ENCODE measurements at regions of chr5 and their contacts with region 1.

Region 1: DNA sequence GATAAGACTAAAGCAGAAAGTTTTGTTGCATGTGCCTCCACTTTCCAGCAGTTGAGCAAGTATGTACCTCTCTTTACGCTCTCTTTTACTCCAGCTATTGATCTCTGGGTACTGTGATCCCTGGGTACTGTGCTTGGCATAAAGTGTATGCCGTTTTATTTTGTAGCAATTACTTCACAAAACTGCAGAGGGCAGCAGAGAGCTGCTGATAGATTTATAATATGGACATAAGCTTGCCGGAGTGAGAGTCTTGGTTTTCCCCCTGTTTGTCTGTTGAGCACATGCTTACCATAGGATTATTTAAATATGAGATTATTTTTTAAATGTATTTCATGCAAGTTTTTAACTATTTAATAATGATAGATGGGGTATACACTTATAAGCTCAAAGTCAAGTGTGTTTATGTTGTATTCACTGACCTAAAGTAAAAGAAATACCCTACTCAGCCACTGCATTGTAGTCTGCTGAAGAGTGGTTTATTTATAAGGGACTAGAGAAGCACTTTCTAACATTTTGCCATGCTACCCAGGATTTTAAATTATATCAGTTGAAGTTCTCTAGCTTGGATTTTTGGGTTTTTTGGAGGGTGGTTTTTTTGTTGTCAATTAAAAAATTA is 13.0 kb downstream of the TTC1 start:
- DNase-seq: peak; percentile 31
- ATAC-seq: peak; percentile 93
- H3K4me3 ChIP-seq: no peak overlapping the region
- H3K27ac ChIP-seq: no peak overlapping the region
- H3K4me1 ChIP-seq: no peaks in the 10 kb centered on the region
- H3K27me3 ChIP-seq: no peaks in the 10 kb centered on the region
- CTCF ChIP-seq: peak; percentile 62 to 74 (median 70)
- POLR2A ChIP-seq: no peak
- RAD21 ChIP-seq: peak; percentile 83

Region 2: GRCh38 chr5:159965031-159965837 is 56.7 kb before region 1 on chr5:
- CTCF ChIA-PET with region 1: no interaction called
- POLR2A ChIA-PET with region 1: no interaction called
- RAD21 ChIA-PET with region 1: no interaction called
- intact Hi-C with region 1: no loop called
- DNase-seq: peak; percentile 33
- ATAC-seq: peak; percentile 95
- H3K4me3 ChIP-seq: no peak overlapping the region
- H3K27ac ChIP-seq: no peak overlapping the region
- H3K4me1 ChIP-seq: peaks cover 0 to 2% of the 10 kb centered on the region in 2 experiments; a peak in 1 of 4 replicates
- H3K27me3 ChIP-seq: no peaks in the 10 kb centered on the region
- CTCF ChIP-seq: peak; percentile 61 to 77 (median 71)
- POLR2A ChIP-seq: no peak
- RAD21 ChIP-seq: peak; percentile 84

Region 3: DNA sequence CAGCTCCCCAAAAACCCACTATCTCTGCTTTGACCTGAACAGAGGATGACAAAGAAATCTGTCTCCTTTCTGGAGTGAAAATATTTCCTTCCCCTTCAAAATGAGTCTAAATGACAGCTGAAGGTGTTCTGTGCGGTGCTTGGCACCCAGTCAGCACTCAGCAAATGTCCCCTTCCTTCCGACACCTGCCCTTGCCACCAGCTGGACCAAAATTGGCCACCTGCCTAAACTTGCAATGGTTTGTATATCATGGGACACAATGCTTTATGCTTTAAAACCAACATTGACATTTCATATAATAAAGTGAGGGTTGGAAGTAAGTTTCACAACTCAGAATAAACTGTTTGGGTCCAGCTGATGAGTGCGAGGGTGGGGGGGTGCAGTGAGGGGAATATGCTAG is 20.5 kb before region 1 on chr5:
- CTCF ChIA-PET with region 1: no interaction called
- POLR2A ChIA-PET with region 1: no interaction called
- RAD21 ChIA-PET with region 1: no interaction called
- intact Hi-C with region 1: no loop called
- DNase-seq: no peak
- ATAC-seq: no peak
- H3K4me3 ChIP-seq: no peak overlapping the region
- H3K27ac ChIP-seq: no peak overlapping the region
- H3K4me1 ChIP-seq: peaks cover 0 to 5% of the 10 kb centered on the region in 2 experiments; a peak in 1 of 4 replicates
- H3K27me3 ChIP-seq: no peaks in the 10 kb centered on the region
- CTCF ChIP-seq: no peak
- POLR2A ChIP-seq: no peak
- RAD21 ChIP-seq: no peak

Region 4: GRCh38 chr5:160081495-160081894 is 59.6 kb after region 1 on chr5:
- CTCF ChIA-PET with region 1: interaction called, 15 read pairs
- POLR2A ChIA-PET with region 1: no interaction called
- RAD21 ChIA-PET with region 1: no interaction called
- intact Hi-C with region 1: no loop called
- DNase-seq: no peak
- ATAC-seq: no peak
- H3K4me3 ChIP-seq: no peak overlapping the region
- H3K27ac ChIP-seq: no peak overlapping the region
- H3K4me1 ChIP-seq: peaks cover 0 to 12% of the 10 kb centered on the region in 2 experiments; a peak in 2 of 4 replicates
- H3K27me3 ChIP-seq: no peaks in the 10 kb centered on the region
- CTCF ChIP-seq: no peak
- POLR2A ChIP-seq: no peak
- RAD21 ChIP-seq: no peak

Region 5: GRCh38 chr5:160165137-160166068 is 143.5 kb after region 1 on chr5:
- CTCF ChIA-PET with region 1: interaction called, 10 read pairs
- POLR2A ChIA-PET with region 1: no interaction called
- RAD21 ChIA-PET with region 1: no interaction called
- intact Hi-C with region 1: no loop called
- DNase-seq: peak; percentile 95
- ATAC-seq: peak; percentile 92
- H3K4me3 ChIP-seq: peak overlapping the region; percentile 38 to 52
- H3K27ac ChIP-seq: peak overlapping the region; percentile 78
- H3K4me1 ChIP-seq: peaks cover 18 to 33% of the 10 kb centered on the region in 2 experiments
- H3K27me3 ChIP-seq: no peaks in the 10 kb centered on the region
- CTCF ChIP-seq: no peak
- POLR2A ChIP-seq: peak; percentile 37
- RAD21 ChIP-seq: no peak

Region 6: GRCh38 chr5:160342403-160342941 is 320.5 kb after region 1 on chr5:
- CTCF ChIA-PET with region 1: interaction called, 32 read pairs
- POLR2A ChIA-PET with region 1: no interaction called
- RAD21 ChIA-PET with region 1: interaction called, 8 to 12 read pairs
- intact Hi-C with region 1: loop called (anchors 2 kb)
- DNase-seq: no peak
- ATAC-seq: no peak
- H3K4me3 ChIP-seq: no peak overlapping the region
- H3K27ac ChIP-seq: no peak overlapping the region
- H3K4me1 ChIP-seq: peaks cover 0 to 7% of the 10 kb centered on the region in 2 experiments; a peak in 2 of 4 replicates
- H3K27me3 ChIP-seq: no peaks in the 10 kb centered on the region
- CTCF ChIP-seq: no peak
- POLR2A ChIP-seq: no peak
- RAD21 ChIP-seq: no peak